Right cardiac atrium (tissue), 5 donors: ENCODE measurements at regions of chr22 and their contacts with region 1.

Region 1: GRCh38 chr22:42079319-42080251 is at the start of gene SMDT1:
- DNase-seq: peak; percentile 100
- ATAC-seq: peak; percentile 94 to 97
- H3K4me3 ChIP-seq: peak within 1 kb of the TSS; percentile 72
- H3K27ac ChIP-seq: peak within 1 kb of the TSS; percentile 99
- H3K4me1 ChIP-seq: peaks cover 9% of the 10 kb centered on the region
- H3K27me3 ChIP-seq: no peaks in the 10 kb centered on the region
- total RNA-seq, gene SMDT1: 124 to 190 (median 153) TPM

Region 2: GRCh38 chr22:42151924-42152635 is 72.5 kb after region 1 on chr22:
- intact Hi-C with region 1: no loop called
- DNase-seq: peak in 2 of 3 donors; percentile 64 to 69
- ATAC-seq: peak; percentile 20 to 47
- H3K4me3 ChIP-seq: no peak overlapping the region
- H3K27ac ChIP-seq: no peak overlapping the region
- H3K4me1 ChIP-seq: no peaks in the 10 kb centered on the region
- H3K27me3 ChIP-seq: no peaks in the 10 kb centered on the region

Region 3: DNA sequence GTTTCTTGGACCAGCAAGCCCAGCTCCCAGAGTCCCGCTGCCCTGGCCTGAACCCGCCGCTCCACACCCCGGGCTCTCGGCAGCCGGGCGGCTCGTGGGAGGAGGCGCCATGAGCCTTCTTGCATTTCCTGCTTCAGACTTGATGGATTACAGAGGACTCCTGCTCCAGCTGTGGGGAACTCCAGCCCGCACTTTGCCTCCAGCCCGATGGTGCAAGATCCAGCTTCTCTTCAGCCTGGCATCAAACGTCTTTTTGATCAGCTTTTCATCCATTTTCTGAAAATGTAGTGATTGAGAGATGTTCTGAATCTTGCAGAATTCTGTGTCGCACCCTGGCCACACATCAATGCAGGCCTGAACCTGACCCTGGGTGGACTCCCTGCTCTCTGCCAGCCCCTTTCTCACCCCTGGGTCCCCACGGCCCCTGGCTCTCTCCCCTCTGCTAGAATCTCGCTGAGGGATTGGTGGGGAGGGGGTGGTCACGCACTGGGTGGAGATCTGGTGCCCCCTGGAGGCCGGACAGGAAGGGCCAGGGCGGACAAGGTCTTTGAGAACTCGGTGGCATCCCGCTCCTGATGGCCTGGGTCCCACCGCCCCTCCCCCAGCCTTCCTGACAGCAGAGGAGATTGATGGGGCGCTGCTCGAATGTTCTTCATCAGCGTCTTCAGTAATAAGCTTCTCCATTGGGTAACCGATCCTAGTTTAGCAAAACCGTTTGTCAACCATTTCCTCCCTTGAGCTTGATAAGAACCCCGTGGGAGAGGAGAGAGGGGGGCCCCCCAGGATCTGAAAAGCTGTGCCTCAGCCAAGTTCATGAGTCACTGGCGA is 364.7 kb after region 1 on chr22:
- intact Hi-C with region 1: loop called in 1 of 4 experiments (anchors 10 kb)
- DNase-seq: peak; percentile 84 to 95 (median 94)
- ATAC-seq: peak; percentile 86 to 87
- H3K4me3 ChIP-seq: peak overlapping the region; percentile 8
- H3K27ac ChIP-seq: peak overlapping the region; percentile 40
- H3K4me1 ChIP-seq: peaks cover 2% of the 10 kb centered on the region
- H3K27me3 ChIP-seq: no peaks in the 10 kb centered on the region